ENCODE measurements at regions of chr5 and their contacts with region 1.

Region 1: DNA sequence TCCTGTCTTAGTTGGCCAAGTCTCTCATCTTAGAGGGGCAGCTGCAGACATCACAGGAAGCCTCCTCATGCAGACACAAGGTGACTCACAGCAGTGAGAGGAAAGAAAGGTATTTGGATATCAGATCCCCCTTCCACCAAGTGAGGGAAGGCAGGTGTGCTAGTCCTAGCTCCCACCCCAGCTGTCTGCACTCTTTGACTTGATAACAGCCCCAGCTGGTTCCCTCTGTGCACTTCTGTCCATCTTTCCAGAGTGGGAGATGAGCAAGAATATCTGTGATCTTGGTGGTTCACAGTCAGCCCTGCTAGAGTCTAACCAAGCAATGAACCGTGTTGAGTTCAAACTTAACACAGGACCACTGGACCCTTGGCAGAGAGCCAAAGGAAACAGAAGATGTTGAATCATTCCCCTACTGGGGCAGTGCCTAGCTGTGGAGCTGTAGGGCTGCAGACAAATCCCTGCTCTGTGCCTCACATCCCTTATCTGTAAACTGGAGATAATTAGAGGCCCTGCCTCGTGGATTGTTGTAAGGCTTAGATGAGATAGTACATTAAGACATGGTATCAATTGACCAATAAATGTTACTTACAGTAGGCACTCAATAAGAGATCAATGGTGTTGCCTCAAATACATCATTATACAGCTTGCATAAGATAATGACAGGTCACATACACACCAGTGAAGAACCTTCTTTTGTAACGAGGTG is 39.1 kb downstream of the SH3RF2 start:
- DNase-seq: peak; percentile 93
- ATAC-seq: peak; percentile 80
- H3K4me3 ChIP-seq: no peak overlapping the region
- H3K27ac ChIP-seq: peak overlapping the region; percentile 5
- H3K4me1 ChIP-seq: peaks cover 75% of the 10 kb centered on the region
- H3K27me3 ChIP-seq: no peaks in the 10 kb centered on the region
- CTCF ChIP-seq: peak; percentile 36; the same call in 1 of the 2 replicates
- EP300 ChIP-seq: peak in 1 of 2 experiments; percentile 48; a peak in 1 of 4 replicates
- POLR2A ChIP-seq: no peak
- RAD21 ChIP-seq: no peak

Region 2: DNA sequence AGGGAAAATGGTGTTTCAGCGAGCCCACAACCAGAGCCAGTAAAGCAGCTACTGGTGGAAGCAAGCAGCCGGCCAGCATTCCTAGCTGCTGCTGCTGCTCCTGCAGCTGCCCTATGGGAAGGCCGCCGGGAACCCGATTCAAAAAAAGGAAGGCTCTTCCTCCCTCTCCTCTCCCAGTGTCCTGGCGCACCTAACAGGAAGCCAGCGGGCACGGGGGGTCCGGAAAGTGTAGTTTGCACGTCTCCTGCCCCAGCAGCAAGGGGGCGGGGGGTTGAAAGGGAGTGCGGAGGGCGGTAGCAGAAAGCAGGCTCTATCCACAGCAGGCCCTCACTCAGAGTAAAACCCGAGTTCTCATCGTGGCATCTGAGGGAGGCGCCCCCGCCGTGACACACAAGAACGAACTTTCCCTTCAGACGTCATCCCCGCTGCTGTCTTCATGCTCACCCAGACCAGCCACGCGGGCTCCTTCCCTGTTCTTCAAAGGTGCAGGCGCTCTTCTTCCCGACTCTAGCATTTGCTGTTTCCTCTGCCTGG is 119.2 kb before region 1 on chr5:
- CTCF ChIA-PET with region 1: no interaction called
- POLR2A ChIA-PET with region 1: interaction called, 3 read pairs
- in situ Hi-C with region 1: no loop called
- intact Hi-C with region 1: loop called (anchors 10 kb)
- DNase-seq: peak; percentile 30
- ATAC-seq: peak; percentile 88
- H3K4me3 ChIP-seq: peak overlapping the region; percentile 49 to 71 (median 57); a peak in 5 of 6 replicates
- H3K27ac ChIP-seq: peak overlapping the region; percentile 30
- H3K4me1 ChIP-seq: peaks cover 49% of the 10 kb centered on the region
- H3K27me3 ChIP-seq: no peaks in the 10 kb centered on the region
- CTCF ChIP-seq: no peak
- EP300 ChIP-seq: no peak
- POLR2A ChIP-seq: no peak
- RAD21 ChIP-seq: no peak

Region 3: GRCh38 chr5:146027751-146028150 is 52.2 kb after region 1 on chr5:
- CTCF ChIA-PET with region 1: no interaction called
- POLR2A ChIA-PET with region 1: interaction called, 5 read pairs
- in situ Hi-C with region 1: no loop called
- intact Hi-C with region 1: loop called (anchors 5 kb)
- DNase-seq: no peak
- ATAC-seq: no peak
- H3K4me3 ChIP-seq: no peak overlapping the region
- H3K27ac ChIP-seq: no peak overlapping the region
- H3K4me1 ChIP-seq: peaks cover 24% of the 10 kb centered on the region
- H3K27me3 ChIP-seq: no peaks in the 10 kb centered on the region
- CTCF ChIP-seq: no peak
- EP300 ChIP-seq: no peak
- POLR2A ChIP-seq: no peak
- RAD21 ChIP-seq: no peak